ENCODE measurements at regions of chr12 and their contacts with region 1.

Region 1: GRCh38 chr12:102033991-102034745 is 27.6 kb downstream of the WASHC3 start:
- DNase-seq: no peak
- H3K4me3 ChIP-seq: no peak overlapping the region
- H3K27ac ChIP-seq: no peak overlapping the region
- H3K4me1 ChIP-seq: no peaks in the 10 kb centered on the region
- H3K27me3 ChIP-seq: no peaks in the 10 kb centered on the region
- CTCF ChIP-seq: no peak

Region 2: DNA sequence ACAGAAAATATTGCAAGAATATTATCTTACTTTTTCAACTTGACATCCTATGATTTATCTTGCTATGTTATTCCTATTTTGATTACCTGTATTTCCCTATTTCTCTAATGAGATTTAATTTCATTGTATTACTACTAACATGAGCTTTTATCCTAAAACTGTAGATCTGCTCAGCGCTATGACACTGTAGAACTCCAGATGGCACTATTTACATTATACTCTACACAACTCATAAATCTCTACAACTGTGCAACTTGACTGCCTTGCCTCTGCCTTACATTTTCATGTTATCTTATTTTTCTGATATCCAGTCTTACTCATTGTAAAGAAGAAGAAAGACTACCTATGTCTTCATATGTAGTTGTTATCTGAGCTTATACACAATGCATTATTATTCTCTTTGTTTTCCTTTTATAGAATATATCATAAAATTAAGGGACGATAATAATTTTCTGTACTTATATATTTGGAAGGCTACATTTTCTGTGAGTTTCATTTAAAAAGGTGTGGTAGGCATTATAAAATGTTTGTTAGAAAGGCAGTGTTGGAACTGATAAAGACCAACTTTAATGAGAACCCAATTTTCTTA is 61.6 kb after region 1 on chr12:
- CTCF ChIA-PET with region 1: no interaction called
- POLR2A ChIA-PET with region 1: no interaction called
- intact Hi-C with region 1: no loop called
- DNase-seq: peak; percentile 41
- H3K4me3 ChIP-seq: no peak overlapping the region
- H3K27ac ChIP-seq: no peak overlapping the region
- H3K4me1 ChIP-seq: no peaks in the 10 kb centered on the region
- H3K27me3 ChIP-seq: no peaks in the 10 kb centered on the region
- CTCF ChIP-seq: peak; percentile 67

Region 3: DNA sequence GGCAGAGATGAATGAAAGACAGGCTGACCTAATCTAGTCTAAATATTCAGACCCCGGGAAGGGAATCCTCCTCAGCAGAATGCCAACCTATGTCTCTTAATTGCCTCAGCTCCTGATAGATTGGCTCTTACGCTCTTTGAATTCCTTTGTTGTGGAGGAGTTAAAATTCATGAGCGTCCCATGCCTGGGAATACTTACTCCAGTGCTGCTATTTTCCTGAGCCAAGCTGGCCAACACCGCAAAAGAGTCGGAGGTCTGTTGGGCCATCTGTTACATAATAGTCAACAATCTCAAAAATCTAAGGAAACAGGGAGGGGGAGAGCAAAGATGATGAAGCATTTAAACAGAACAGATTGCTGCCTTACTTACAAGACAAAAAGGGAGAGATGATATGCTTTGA is 1106.1 kb after region 1 on chr12:
- CTCF ChIA-PET with region 1: no interaction called
- POLR2A ChIA-PET with region 1: no interaction called
- intact Hi-C with region 1: loop called (anchors 10 kb)
- DNase-seq: no peak
- H3K4me3 ChIP-seq: no peak overlapping the region
- H3K27ac ChIP-seq: no peak overlapping the region
- H3K4me1 ChIP-seq: no peaks in the 10 kb centered on the region
- H3K27me3 ChIP-seq: no peaks in the 10 kb centered on the region
- CTCF ChIP-seq: no peak

Measured in A673 (cell line).